ENCODE measurements at regions of chr13 and their contacts with region 1.

Region 1: GRCh38 chr13:75760131-75761021 is 124.2 kb downstream of the LMO7 start:
- DNase-seq: peak in 4 of 9 experiments; percentile 10 to 60 (median 46)
- ATAC-seq: peak; percentile 71
- H3K4me3 ChIP-seq: peak overlapping the region; percentile 32 to 40
- H3K4me3 Mint-ChIP-seq: peak overlapping the region; percentile 83
- H3K27ac ChIP-seq: peak overlapping the region in 1 of 2 experiments; percentile 50
- H3K27ac Mint-ChIP-seq: peak overlapping the region; percentile 84
- H3K4me1 ChIP-seq: peaks cover 34% of the 10 kb centered on the region
- H3K4me1 Mint-ChIP-seq: peaks cover 59% of the 10 kb centered on the region
- H3K27me3 ChIP-seq: no peaks in the 10 kb centered on the region
- H3K27me3 Mint-ChIP-seq: no peaks in the 10 kb centered on the region
- CTCF ChIP-seq: peak; percentile 17

Region 2: GRCh38 chr13:74226791-74227475 is 1533.4 kb before region 1 on chr13:
- CTCF ChIA-PET with region 1: no interaction called
- POLR2A ChIA-PET with region 1: no interaction called
- intact Hi-C with region 1: loop called in 1 of 2 experiments (anchors 10 kb)
- DNase-seq: no peak
- ATAC-seq: no peak
- H3K4me3 ChIP-seq: no peak overlapping the region
- H3K4me3 Mint-ChIP-seq: no peak overlapping the region
- H3K27ac ChIP-seq: no peak overlapping the region
- H3K27ac Mint-ChIP-seq: no peak overlapping the region
- H3K4me1 ChIP-seq: peaks cover 13% of the 10 kb centered on the region
- H3K4me1 Mint-ChIP-seq: peaks cover 24% of the 10 kb centered on the region
- H3K27me3 ChIP-seq: no peaks in the 10 kb centered on the region
- H3K27me3 Mint-ChIP-seq: no peaks in the 10 kb centered on the region
- CTCF ChIP-seq: no peak

Region 3: GRCh38 chr13:74485757-74486156 is 1274.6 kb before region 1 on chr13:
- CTCF ChIA-PET with region 1: no interaction called
- POLR2A ChIA-PET with region 1: no interaction called
- intact Hi-C with region 1: no loop called
- DNase-seq: no peak
- ATAC-seq: no peak
- H3K4me3 ChIP-seq: no peak overlapping the region
- H3K4me3 Mint-ChIP-seq: no peak overlapping the region
- H3K27ac ChIP-seq: no peak overlapping the region
- H3K27ac Mint-ChIP-seq: no peak overlapping the region
- H3K4me1 ChIP-seq: no peaks in the 10 kb centered on the region
- H3K4me1 Mint-ChIP-seq: peaks cover 2% of the 10 kb centered on the region
- H3K27me3 ChIP-seq: no peaks in the 10 kb centered on the region
- H3K27me3 Mint-ChIP-seq: peaks cover 4% of the 10 kb centered on the region
- CTCF ChIP-seq: no peak

Region 4: GRCh38 chr13:75537401-75538365 is 222.7 kb before region 1 on chr13 and contains the start of gene COMMD6:
- CTCF ChIA-PET with region 1: no interaction called
- POLR2A ChIA-PET with region 1: no interaction called
- intact Hi-C with region 1: loop called in 1 of 2 experiments (anchors 10 kb)
- DNase-seq: peak; percentile 34 to 86 (median 68)
- ATAC-seq: peak; percentile 94
- H3K4me3 ChIP-seq: peak within 1 kb of the TSS; percentile 71 to 87
- H3K4me3 Mint-ChIP-seq: peak within 1 kb of the TSS; percentile 98
- H3K27ac ChIP-seq: peak within 1 kb of the TSS; percentile 43 to 71
- H3K27ac Mint-ChIP-seq: peak within 1 kb of the TSS; percentile 96
- H3K4me1 ChIP-seq: peaks cover 14% of the 10 kb centered on the region
- H3K4me1 Mint-ChIP-seq: peaks cover 46% of the 10 kb centered on the region
- H3K27me3 ChIP-seq: no peaks in the 10 kb centered on the region
- H3K27me3 Mint-ChIP-seq: no peaks in the 10 kb centered on the region
- CTCF ChIP-seq: no peak
- total RNA-seq, gene COMMD6: 191 to 204 TPM

Region 5: GRCh38 chr13:75566658-75567057 is 193.7 kb before region 1 on chr13:
- CTCF ChIA-PET with region 1: no interaction called
- POLR2A ChIA-PET with region 1: no interaction called
- intact Hi-C with region 1: no loop called
- DNase-seq: no peak
- ATAC-seq: no peak
- H3K4me3 ChIP-seq: no peak overlapping the region
- H3K4me3 Mint-ChIP-seq: no peak overlapping the region
- H3K27ac ChIP-seq: no peak overlapping the region
- H3K27ac Mint-ChIP-seq: no peak overlapping the region
- H3K4me1 ChIP-seq: no peaks in the 10 kb centered on the region
- H3K4me1 Mint-ChIP-seq: no peaks in the 10 kb centered on the region
- H3K27me3 ChIP-seq: no peaks in the 10 kb centered on the region
- H3K27me3 Mint-ChIP-seq: no peaks in the 10 kb centered on the region
- CTCF ChIP-seq: no peak

Region 6: DNA sequence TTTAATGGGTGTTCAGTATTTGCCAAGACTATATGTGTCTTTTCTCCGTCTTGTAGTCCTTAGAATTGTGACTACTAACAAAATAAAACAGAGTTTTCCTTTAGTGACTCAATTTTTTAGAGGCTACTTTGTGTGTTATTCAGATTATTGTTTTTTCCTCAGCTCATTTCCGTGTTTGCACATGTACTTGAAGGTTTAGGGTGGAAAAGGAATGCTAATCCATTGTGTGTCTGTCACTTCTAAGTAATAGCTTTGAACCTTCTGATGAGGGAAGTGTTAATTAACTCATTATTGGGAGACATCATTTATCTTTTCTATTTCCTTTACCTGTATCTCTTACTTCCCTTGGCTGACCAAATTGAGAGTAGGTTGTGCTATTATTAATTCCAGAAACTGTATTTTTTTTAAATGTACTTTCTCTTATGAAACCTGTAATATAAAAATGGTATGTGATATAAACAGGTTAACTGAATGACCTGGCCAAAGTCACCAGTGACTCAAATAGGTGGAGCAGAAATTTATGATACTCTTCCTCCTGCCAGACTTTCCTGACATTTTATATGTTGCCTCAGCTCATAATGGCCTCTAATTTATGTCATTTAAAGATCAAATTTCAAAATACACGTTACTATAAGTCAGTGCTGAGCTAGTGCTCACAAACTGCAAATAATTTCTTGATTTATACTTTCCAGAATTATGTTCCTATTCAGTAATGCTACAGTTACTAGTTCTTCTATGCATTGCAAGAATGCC is 35.4 kb before region 1 on chr13:
- CTCF ChIA-PET with region 1: no interaction called
- POLR2A ChIA-PET with region 1: no interaction called
- intact Hi-C with region 1: no loop called
- DNase-seq: no peak
- ATAC-seq: no peak
- H3K4me3 ChIP-seq: no peak overlapping the region
- H3K4me3 Mint-ChIP-seq: no peak overlapping the region
- H3K27ac ChIP-seq: no peak overlapping the region
- H3K27ac Mint-ChIP-seq: no peak overlapping the region
- H3K4me1 ChIP-seq: no peaks in the 10 kb centered on the region
- H3K4me1 Mint-ChIP-seq: no peaks in the 10 kb centered on the region
- H3K27me3 ChIP-seq: no peaks in the 10 kb centered on the region
- H3K27me3 Mint-ChIP-seq: no peaks in the 10 kb centered on the region
- CTCF ChIP-seq: no peak

Region 7: DNA sequence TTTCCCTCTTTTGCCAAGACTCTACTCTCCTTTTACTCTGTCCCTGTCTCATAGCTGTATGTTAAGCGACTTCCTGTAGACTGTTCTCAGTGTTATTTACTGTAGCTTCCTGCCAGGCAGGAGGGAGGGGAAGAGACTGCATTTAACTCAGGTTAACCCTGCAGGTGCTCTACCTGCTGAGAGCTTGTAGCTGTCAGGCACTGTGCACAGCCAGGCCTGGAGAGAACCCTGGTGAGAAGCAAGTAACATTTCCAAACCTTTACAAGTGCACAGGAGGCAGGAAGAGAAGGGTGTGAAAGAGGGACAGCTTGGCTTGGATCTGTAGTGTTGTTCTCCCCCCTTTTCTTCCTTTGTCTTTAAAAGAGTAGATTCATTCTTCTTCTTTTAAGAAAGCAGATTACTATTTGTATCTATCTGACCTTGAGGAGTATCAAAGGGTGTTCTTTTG is 42.8 kb after region 1 on chr13:
- CTCF ChIA-PET with region 1: interaction called, 5 read pairs
- POLR2A ChIA-PET with region 1: interaction called, 21 read pairs
- intact Hi-C with region 1: loop called (anchors 1 to 2 kb)
- DNase-seq: peak in 7 of 9 experiments; percentile 4 to 58 (median 23)
- ATAC-seq: peak; percentile 98
- H3K4me3 ChIP-seq: no peak overlapping the region
- H3K4me3 Mint-ChIP-seq: peak overlapping the region; percentile 36
- H3K27ac ChIP-seq: peak overlapping the region in 1 of 2 experiments; percentile 24
- H3K27ac Mint-ChIP-seq: peak overlapping the region; percentile 87
- H3K4me1 ChIP-seq: peaks cover 18% of the 10 kb centered on the region
- H3K4me1 Mint-ChIP-seq: peaks cover 34% of the 10 kb centered on the region
- H3K27me3 ChIP-seq: no peaks in the 10 kb centered on the region
- H3K27me3 Mint-ChIP-seq: no peaks in the 10 kb centered on the region
- CTCF ChIP-seq: no peak

Region 8: GRCh38 chr13:75841905-75842304 is 81.5 kb after region 1 on chr13:
- CTCF ChIA-PET with region 1: interaction called, 3 read pairs
- POLR2A ChIA-PET with region 1: no interaction called
- intact Hi-C with region 1: loop called in 1 of 2 experiments (anchors 5 kb)
- DNase-seq: peak in 1 of 9 experiments; percentile 6
- ATAC-seq: no peak
- H3K4me3 ChIP-seq: no peak overlapping the region
- H3K4me3 Mint-ChIP-seq: no peak overlapping the region
- H3K27ac ChIP-seq: no peak overlapping the region
- H3K27ac Mint-ChIP-seq: peak overlapping the region; percentile 2
- H3K4me1 ChIP-seq: peaks cover 3% of the 10 kb centered on the region
- H3K4me1 Mint-ChIP-seq: peaks cover 16% of the 10 kb centered on the region
- H3K27me3 ChIP-seq: no peaks in the 10 kb centered on the region
- H3K27me3 Mint-ChIP-seq: no peaks in the 10 kb centered on the region
- CTCF ChIP-seq: no peak

Region 9: GRCh38 chr13:75870397-75870903 is 110.1 kb after region 1 on chr13:
- CTCF ChIA-PET with region 1: interaction called, 12 read pairs
- POLR2A ChIA-PET with region 1: no interaction called
- intact Hi-C with region 1: no loop called
- DNase-seq: peak in 4 of 9 experiments; percentile 3 to 54 (median 18)
- ATAC-seq: peak; percentile 62
- H3K4me3 ChIP-seq: peak overlapping the region; percentile 3 to 29
- H3K4me3 Mint-ChIP-seq: peak overlapping the region; percentile 76
- H3K27ac ChIP-seq: peak overlapping the region in 1 of 2 experiments; percentile 0
- H3K27ac Mint-ChIP-seq: peak overlapping the region; percentile 62
- H3K4me1 ChIP-seq: no peaks in the 10 kb centered on the region
- H3K4me1 Mint-ChIP-seq: peaks cover 17% of the 10 kb centered on the region
- H3K27me3 ChIP-seq: no peaks in the 10 kb centered on the region
- H3K27me3 Mint-ChIP-seq: peaks cover 5% of the 10 kb centered on the region
- CTCF ChIP-seq: peak; percentile 89

Measured in CD8-positive, alpha-beta T cell (primary cell).